Activated CD8-positive, alpha-beta T cell treated with anti-CD3 and anti-CD28 coated beads for 36 hours (primary cell): ENCODE measurements at regions of chr5 and their contacts with region 1.

Region 1: DNA sequence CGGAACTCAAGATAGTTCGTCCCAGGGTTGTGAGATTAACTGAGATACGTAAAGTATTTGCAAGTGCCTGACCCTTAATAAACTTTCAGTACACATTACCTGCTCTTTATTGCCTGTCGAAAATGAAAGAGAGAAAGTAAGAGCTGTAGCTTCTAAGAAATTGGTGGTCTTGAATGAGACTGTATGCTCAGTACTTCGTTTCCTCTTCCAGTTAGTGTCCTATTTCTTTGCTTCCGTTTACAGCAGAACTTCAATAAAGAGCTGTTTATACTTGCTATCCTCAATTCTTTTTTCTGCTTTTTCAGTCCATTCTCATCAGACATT is 534 bp downstream of the SRFBP1 start:
- DNase-seq: no peak
- ATAC-seq: peak; percentile 35
- H3K4me3 Mint-ChIP-seq: peak overlapping the region; percentile 97
- H3K27ac Mint-ChIP-seq: peak overlapping the region; percentile 99
- H3K4me1 Mint-ChIP-seq: peaks cover 41% of the 10 kb centered on the region
- H3K27me3 Mint-ChIP-seq: peaks cover 9% of the 10 kb centered on the region
- CTCF ChIP-seq: no peak

Region 2: DNA sequence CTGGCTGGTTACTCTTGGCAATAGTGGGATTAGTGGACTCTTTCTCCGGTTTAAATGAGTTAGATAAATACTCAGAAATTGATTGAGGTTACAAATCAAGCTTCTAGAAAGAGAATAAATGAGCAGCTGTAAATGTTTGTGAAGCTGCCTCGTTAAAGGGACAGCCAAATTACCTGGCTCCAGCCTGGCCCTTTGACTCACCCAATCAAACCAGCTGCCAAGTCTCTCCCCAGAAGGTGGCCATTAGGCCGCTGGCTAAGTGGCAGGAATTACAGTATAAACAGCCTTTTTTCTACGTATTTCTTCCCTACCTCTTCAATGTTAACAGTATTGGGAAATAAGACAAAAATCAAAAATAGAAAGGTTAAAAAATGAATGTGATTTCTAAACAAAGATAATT is 46.5 kb before region 1 on chr5:
- CTCF ChIA-PET with region 1: no interaction called
- POLR2A ChIA-PET with region 1: no interaction called
- intact Hi-C with region 1: no loop called
- DNase-seq: no peak
- ATAC-seq: no peak
- H3K4me3 Mint-ChIP-seq: no peak overlapping the region
- H3K27ac Mint-ChIP-seq: no peak overlapping the region
- H3K4me1 Mint-ChIP-seq: no peaks in the 10 kb centered on the region
- H3K27me3 Mint-ChIP-seq: peaks cover 8% of the 10 kb centered on the region
- CTCF ChIP-seq: no peak

Region 3: DNA sequence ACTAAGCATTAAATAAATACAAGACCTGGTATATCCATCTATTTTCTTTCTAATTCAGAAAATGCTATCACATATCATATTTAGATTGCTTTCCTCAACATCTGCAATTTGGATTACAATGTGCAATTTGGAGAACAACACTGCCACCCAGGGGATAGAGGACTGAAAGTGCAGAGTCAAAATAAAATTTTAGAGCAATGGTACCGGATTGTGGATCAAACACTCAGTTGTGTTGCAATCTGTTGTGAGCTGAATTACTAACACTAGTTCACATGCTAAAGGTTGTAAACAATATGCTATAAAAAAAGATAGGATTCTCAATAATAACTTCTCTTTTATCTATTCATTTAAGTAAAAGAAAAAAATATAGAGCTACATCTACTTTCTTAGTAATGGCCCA is 12.4 kb before region 1 on chr5:
- CTCF ChIA-PET with region 1: interaction called, 29 read pairs
- POLR2A ChIA-PET with region 1: no interaction called
- intact Hi-C with region 1: no loop called
- DNase-seq: peak; percentile 30
- ATAC-seq: no peak
- H3K4me3 Mint-ChIP-seq: no peak overlapping the region
- H3K27ac Mint-ChIP-seq: no peak overlapping the region
- H3K4me1 Mint-ChIP-seq: no peaks in the 10 kb centered on the region
- H3K27me3 Mint-ChIP-seq: peaks cover 8% of the 10 kb centered on the region
- CTCF ChIP-seq: peak; percentile 57